Activated CD8-positive, alpha-beta T cell treated with anti-CD3 and anti-CD28 coated beads, Interleukin-2, amount 10 ng/mL, durations not matched to agents 7 days and 5 days (primary cell): ENCODE measurements at regions of chr11 and their contacts with region 1.

Region 1: GRCh38 chr11:122796128-122796717 is 42.1 kb upstream of the CRTAM start:
- DNase-seq: peak; percentile 76
- ATAC-seq: peak; percentile 86
- H3K4me3 Mint-ChIP-seq: no peak overlapping the region
- H3K27ac Mint-ChIP-seq: no peak overlapping the region
- H3K4me1 Mint-ChIP-seq: no peaks in the 10 kb centered on the region
- H3K27me3 Mint-ChIP-seq: no peaks in the 10 kb centered on the region

Region 2: DNA sequence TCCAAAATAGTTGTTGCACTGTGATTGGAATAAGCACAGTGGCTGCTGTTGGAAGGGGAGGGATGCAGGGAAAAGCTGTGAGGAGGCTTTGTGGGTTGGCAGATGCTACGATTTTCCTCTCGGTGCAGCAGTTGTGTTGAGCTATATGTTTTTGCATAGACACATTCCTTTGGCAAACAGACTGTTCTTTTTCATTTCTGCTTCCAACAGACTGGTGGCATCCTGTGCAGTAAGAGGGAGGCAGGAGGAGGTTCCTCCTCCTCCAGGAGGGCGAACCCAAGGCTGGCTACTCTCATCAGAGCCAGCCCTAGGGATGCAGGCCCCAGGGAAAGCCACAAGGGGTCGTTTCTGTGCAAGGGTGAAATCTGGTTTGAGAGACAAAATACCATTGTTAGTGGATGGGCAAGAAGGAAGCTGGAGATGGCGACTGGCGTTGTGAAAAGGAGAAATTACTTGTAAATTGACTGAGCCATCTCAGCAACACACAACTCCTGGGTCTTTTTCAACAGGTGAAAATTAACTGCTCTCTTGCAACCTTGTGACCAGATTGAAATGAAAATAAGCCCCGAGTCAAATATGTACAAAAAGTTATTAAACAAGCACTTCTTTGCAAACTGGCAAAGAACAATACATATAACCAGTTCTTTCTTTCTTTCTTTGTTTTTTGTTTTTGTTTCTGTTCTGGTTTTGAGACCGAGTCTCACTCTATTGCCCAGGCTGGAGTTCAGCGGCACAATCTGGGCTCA is 167.2 kb before region 1 on chr11:
- CTCF ChIA-PET with region 1: interaction called, 17 read pairs
- POLR2A ChIA-PET with region 1: no interaction called
- DNase-seq: peak; percentile 81
- ATAC-seq: peak; percentile 86
- H3K4me3 Mint-ChIP-seq: no peak overlapping the region
- H3K27ac Mint-ChIP-seq: no peak overlapping the region
- H3K4me1 Mint-ChIP-seq: peaks cover 33% of the 10 kb centered on the region
- H3K27me3 Mint-ChIP-seq: peaks cover 2% of the 10 kb centered on the region

Region 3: GRCh38 chr11:122808478-122808869 is 12.3 kb after region 1 on chr11:
- CTCF ChIA-PET with region 1: interaction called, 40 read pairs
- POLR2A ChIA-PET with region 1: no interaction called
- DNase-seq: no peak
- ATAC-seq: no peak
- H3K4me3 Mint-ChIP-seq: no peak overlapping the region
- H3K27ac Mint-ChIP-seq: peak overlapping the region; percentile 58
- H3K4me1 Mint-ChIP-seq: peaks cover 64% of the 10 kb centered on the region
- H3K27me3 Mint-ChIP-seq: no peaks in the 10 kb centered on the region

Region 4: DNA sequence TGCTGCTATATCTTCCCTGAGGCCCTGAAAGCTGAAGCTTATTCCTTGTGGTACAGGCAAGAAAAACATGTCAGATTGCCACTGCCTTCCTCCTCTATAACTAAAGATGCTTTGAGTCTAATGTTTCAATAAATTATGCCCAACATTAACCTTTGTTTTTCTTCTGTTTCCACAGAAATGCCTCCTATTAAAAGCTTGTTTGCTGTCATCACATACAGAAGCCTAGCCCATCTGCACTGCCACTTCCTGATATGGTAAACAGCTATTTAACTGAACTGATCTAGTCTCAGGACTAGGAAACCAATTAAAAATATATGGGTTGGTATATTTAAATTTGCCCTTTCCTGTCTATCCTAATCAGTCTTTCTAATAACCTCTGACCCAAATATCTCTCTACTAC is 24.9 kb after region 1 on chr11:
- CTCF ChIA-PET with region 1: interaction called, 22 read pairs
- POLR2A ChIA-PET with region 1: interaction called, 3 read pairs
- DNase-seq: no peak
- ATAC-seq: no peak
- H3K4me3 Mint-ChIP-seq: no peak overlapping the region
- H3K27ac Mint-ChIP-seq: no peak overlapping the region
- H3K4me1 Mint-ChIP-seq: peaks cover 20% of the 10 kb centered on the region
- H3K27me3 Mint-ChIP-seq: no peaks in the 10 kb centered on the region

Region 5: DNA sequence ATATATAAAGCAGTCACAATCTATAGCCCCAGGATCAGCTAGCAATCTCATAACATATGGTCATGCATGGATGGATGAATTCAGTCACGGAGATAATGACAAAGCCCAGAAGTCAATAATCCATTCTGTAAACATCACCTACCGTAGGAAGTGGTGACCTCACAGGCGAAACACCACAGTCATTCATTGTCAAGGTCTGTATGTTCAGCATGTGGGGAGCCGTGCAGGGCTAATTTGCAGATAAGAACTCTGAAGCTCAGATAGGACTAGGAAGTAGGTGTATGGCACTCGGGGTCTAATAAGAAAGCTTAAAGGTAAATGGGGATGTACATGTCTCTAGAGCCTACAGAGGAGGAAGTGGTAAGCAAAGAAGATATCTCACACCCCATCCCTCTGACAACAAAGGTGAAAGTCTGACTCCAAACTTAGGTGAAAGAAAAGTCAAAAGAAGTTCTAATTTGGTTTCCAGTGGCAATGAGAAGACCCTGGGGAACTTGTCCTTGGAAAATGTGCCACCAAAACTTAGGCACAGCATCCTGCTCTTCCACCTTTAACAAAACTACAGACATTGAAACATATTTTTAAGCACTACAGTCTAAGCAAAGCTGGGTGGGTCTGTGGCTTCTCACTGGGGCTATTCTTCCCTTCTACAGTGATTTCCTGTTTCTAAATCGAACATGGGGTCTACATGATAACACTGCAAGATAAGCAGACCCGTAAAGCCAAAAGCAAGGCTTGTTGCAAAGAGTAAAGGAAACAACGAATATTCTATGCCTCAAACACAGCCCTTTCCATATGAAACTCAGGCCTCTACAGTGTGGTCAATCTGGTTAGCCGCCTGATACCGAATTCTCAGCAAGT is 47.3 kb after region 1 on chr11:
- CTCF ChIA-PET with region 1: interaction called, 21 read pairs
- POLR2A ChIA-PET with region 1: interaction called, 4 read pairs
- DNase-seq: peak; percentile 82
- ATAC-seq: peak; percentile 84
- H3K4me3 Mint-ChIP-seq: peak overlapping the region; percentile 67
- H3K27ac Mint-ChIP-seq: peak overlapping the region; percentile 94
- H3K4me1 Mint-ChIP-seq: peaks cover 80% of the 10 kb centered on the region
- H3K27me3 Mint-ChIP-seq: no peaks in the 10 kb centered on the region